Mammary epithelial cell (primary cell): ENCODE measurements at regions of chr1 and their contacts with region 1.

Region 1: GRCh38 chr1:109112652-109113285 is 1.1 kb upstream of the ELAPOR1 start:
- DNase-seq: peak; percentile 77
- H3K4me3 ChIP-seq: peak overlapping the region in 1 of 3 experiments; percentile 14
- H3K27ac ChIP-seq: peak overlapping the region; percentile 31
- H3K4me1 ChIP-seq: peaks cover 12% of the 10 kb centered on the region
- H3K27me3 ChIP-seq: peaks cover 2% of the 10 kb centered on the region
- CTCF ChIP-seq: peak; percentile 95 to 99

Region 2: GRCh38 chr1:108512239-108512981 is 600.4 kb before region 1 on chr1:
- CTCF ChIA-PET with region 1: no interaction called
- dilution Hi-C with region 1: no loop called
- in situ Hi-C with region 1: no loop called
- intact Hi-C with region 1: loop called (anchors 1 kb)
- DNase-seq: no peak
- H3K4me3 ChIP-seq: no peak overlapping the region
- H3K27ac ChIP-seq: no peak overlapping the region
- H3K4me1 ChIP-seq: no peaks in the 10 kb centered on the region
- H3K27me3 ChIP-seq: no peaks in the 10 kb centered on the region
- CTCF ChIP-seq: peak; percentile 68 to 81

Region 3: GRCh38 chr1:108897865-108898720 is 214.7 kb before region 1 on chr1:
- CTCF ChIA-PET with region 1: no interaction called
- dilution Hi-C with region 1: no loop called
- in situ Hi-C with region 1: no loop called
- intact Hi-C with region 1: loop called (anchors 2 kb)
- DNase-seq: peak; percentile 48
- H3K4me3 ChIP-seq: no peak overlapping the region
- H3K27ac ChIP-seq: no peak overlapping the region
- H3K4me1 ChIP-seq: peaks cover 8% of the 10 kb centered on the region
- H3K27me3 ChIP-seq: no peaks in the 10 kb centered on the region
- CTCF ChIP-seq: peak; percentile 66 to 75

Region 4: DNA sequence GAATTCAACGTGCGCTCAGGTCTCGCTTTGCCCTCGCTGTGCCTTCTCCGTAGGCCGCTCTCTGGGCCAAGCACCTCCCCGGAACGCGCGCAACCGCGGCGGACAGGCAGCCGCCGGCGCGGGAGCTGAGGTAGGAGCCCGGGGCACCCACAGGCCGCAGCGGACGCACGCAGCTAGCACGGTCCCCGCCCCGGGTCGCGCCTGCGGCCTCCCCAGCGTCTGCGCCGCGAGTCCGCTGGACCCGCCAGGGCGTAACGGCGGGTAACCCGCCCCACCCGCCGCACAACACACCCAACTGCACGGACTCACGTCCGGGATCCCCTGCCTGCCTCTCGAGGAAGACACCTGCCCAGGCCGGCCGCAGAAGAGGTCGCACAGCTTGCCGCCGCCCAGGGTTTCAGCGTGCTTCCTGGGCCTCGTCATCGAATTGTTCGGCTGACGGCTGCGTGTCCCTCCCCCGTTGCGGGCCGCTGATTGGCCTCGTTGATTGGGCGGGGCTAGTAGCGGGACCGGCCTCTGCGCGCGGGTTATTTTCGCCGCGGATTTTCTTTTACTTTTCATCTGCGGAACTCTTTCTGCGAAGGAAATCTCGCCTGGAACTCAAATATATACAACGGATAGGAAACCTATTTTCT is 149.6 kb before region 1 on chr1 and contains the start of gene CLCC1:
- CTCF ChIA-PET with region 1: no interaction called
- dilution Hi-C with region 1: no loop called
- in situ Hi-C with region 1: no loop called
- intact Hi-C with region 1: loop called (anchors 1 kb)
- DNase-seq: peak; percentile 96
- H3K4me3 ChIP-seq: peak within 1 kb of the TSS; percentile 71 to 81 (median 79)
- H3K27ac ChIP-seq: peak within 1 kb of the TSS; percentile 82
- H3K4me1 ChIP-seq: peaks cover 15% of the 10 kb centered on the region
- H3K27me3 ChIP-seq: no peaks in the 10 kb centered on the region
- CTCF ChIP-seq: no peak
- total RNA-seq, gene CLCC1: 20.3 to 26.3 TPM

Region 5: GRCh38 chr1:109099938-109100773 is 12.6 kb before region 1 on chr1:
- CTCF ChIA-PET with region 1: interaction called, 7 read pairs
- dilution Hi-C with region 1: no loop called
- in situ Hi-C with region 1: no loop called
- intact Hi-C with region 1: loop called (anchors 1 kb)
- DNase-seq: peak; percentile 94
- H3K4me3 ChIP-seq: peak overlapping the region; percentile 76 to 90 (median 84)
- H3K27ac ChIP-seq: peak overlapping the region; percentile 80
- H3K4me1 ChIP-seq: peaks cover 8% of the 10 kb centered on the region
- H3K27me3 ChIP-seq: no peaks in the 10 kb centered on the region
- CTCF ChIP-seq: peak; percentile 83 to 93

Region 6: GRCh38 chr1:109263597-109264398 is 151.0 kb after region 1 on chr1:
- CTCF ChIA-PET with region 1: no interaction called
- dilution Hi-C with region 1: no loop called
- in situ Hi-C with region 1: no loop called
- intact Hi-C with region 1: loop called (anchors 1 kb)
- DNase-seq: no peak
- H3K4me3 ChIP-seq: no peak overlapping the region
- H3K27ac ChIP-seq: peak overlapping the region; percentile 40
- H3K4me1 ChIP-seq: peaks cover 32% of the 10 kb centered on the region
- H3K27me3 ChIP-seq: no peaks in the 10 kb centered on the region
- CTCF ChIP-seq: peak; percentile 100

Region 7: GRCh38 chr1:109539676-109540075 is 426.9 kb after region 1 on chr1 and contains the start of gene GPR61:
- CTCF ChIA-PET with region 1: no interaction called
- dilution Hi-C with region 1: no loop called
- in situ Hi-C with region 1: no loop called
- intact Hi-C with region 1: no loop called
- DNase-seq: no peak
- H3K4me3 ChIP-seq: no peak within 1 kb of the TSS
- H3K27ac ChIP-seq: no peak within 1 kb of the TSS
- H3K4me1 ChIP-seq: no peaks in the 10 kb centered on the region
- H3K27me3 ChIP-seq: no peaks in the 10 kb centered on the region
- CTCF ChIP-seq: no peak
- total RNA-seq, gene GPR61: under 0.01 TPM in 1 of 2 donors, not detected in the other